CD14-positive monocyte (primary cell): ENCODE measurements at regions of chr10 and their contacts with region 1.

Region 1: DNA sequence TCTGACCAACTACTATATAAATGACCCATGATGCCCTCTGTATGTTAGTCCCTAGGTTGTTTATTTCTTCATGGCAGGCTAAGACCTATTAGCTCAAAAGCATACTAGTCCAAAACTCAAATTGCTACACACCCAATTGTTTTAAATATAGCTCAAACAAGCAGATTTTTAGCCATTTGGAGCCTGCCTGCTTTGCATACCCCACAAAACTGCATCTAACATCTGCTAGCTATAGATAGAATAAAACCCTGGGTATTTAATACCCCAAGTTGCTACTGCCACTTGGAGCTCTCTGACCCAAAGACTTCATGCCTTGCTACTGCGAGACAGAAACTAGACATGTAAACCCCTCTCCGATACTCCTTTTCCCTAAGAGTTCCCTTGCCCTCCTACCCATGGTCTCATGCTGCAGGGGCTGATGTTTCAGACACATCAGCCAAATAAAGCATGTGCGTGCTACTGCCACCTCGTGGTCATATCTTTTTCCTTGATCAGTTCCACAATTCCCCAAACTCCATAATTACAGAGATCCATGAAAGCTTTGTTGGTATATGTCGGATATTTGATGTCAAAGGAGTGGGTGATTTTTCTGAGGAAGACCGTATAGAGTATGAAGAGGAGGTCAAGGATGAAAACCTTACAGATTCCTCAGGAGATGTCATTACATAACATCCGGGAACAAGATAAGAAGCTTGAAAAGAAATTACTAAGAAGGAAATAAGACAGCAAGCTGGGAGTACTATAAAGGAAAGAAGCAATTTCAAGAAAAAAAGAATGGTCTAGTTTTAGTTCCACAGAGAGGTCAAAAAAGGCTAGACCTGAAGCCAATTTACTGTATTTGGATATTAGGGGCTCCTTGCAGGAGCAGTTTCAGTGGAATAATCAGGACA is 386.6 kb downstream of the SH2D4B start:
- DNase-seq: peak; percentile 10 to 28 (median 27)
- H3K4me3 ChIP-seq: no peak overlapping the region
- H3K4me3 Mint-ChIP-seq: no peak overlapping the region
- H3K27ac ChIP-seq: no peak overlapping the region
- H3K27ac Mint-ChIP-seq: no peak overlapping the region
- H3K4me1 ChIP-seq: no peaks in the 10 kb centered on the region
- H3K4me1 Mint-ChIP-seq: no peaks in the 10 kb centered on the region
- H3K27me3 ChIP-seq: no peaks in the 10 kb centered on the region
- H3K27me3 Mint-ChIP-seq: peaks cover 0 to 5% (median 2%) of the 10 kb centered on the region in 3 donors
- CTCF ChIP-seq: peak; percentile 73

Region 2: GRCh38 chr10:80662577-80663261 is 261.6 kb before region 1 on chr10:
- intact Hi-C with region 1: loop called (anchors 10 kb)
- DNase-seq: peak; percentile 53 to 74 (median 69)
- H3K4me3 ChIP-seq: peak overlapping the region in 2 of 3 experiments; percentile 11 to 65
- H3K4me3 Mint-ChIP-seq: peak overlapping the region; percentile 63 to 87
- H3K27ac ChIP-seq: no peak overlapping the region
- H3K27ac Mint-ChIP-seq: peak overlapping the region in 1 of 7 donors; percentile 56
- H3K4me1 ChIP-seq: peaks cover 41 to 42% of the 10 kb centered on the region in 2 donors
- H3K4me1 Mint-ChIP-seq: peaks cover 48% of the 10 kb centered on the region
- H3K27me3 ChIP-seq: no peaks in the 10 kb centered on the region
- H3K27me3 Mint-ChIP-seq: peaks cover 0 to 7% (median 2%) of the 10 kb centered on the region in 3 donors
- CTCF ChIP-seq: peak; percentile 96

Region 3: DNA sequence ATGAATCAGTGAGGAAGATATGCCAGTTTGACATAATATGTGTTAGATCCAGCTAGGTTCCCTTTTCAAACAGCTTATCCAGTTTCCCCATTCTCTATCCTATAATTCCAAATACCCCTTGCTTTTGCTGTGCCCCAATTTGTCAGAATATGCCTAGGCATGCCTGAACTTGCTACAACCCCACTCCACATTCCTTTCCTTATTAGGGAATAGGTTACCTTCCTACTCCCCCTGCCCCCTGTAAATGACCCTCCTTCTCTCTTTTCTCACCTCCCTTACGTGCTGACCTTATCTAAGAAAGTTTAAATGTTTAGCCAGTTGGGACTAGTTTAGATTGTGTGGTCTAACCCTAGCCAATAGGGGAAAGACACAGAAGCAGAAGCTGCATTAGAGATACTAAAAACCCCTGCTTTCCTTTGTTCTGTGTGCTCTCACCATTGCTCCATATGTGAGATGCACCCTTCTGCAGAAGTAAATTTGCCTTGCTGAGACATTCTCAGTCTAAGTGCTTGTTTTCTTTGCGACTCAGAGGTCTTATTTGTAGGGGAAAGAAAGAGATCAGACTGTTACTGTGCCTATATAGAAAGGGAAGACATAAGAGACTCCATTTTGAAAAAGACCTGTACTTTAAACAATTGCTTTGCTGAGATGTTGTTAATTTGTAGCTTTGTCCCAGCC is 118.8 kb before region 1 on chr10:
- intact Hi-C with region 1: no loop called
- DNase-seq: no peak
- H3K4me3 ChIP-seq: no peak overlapping the region
- H3K4me3 Mint-ChIP-seq: no peak overlapping the region
- H3K27ac ChIP-seq: no peak overlapping the region
- H3K27ac Mint-ChIP-seq: no peak overlapping the region
- H3K4me1 ChIP-seq: no peaks in the 10 kb centered on the region
- H3K4me1 Mint-ChIP-seq: no peaks in the 10 kb centered on the region
- H3K27me3 ChIP-seq: no peaks in the 10 kb centered on the region
- H3K27me3 Mint-ChIP-seq: no peaks in the 10 kb centered on the region
- CTCF ChIP-seq: no peak

Region 4: GRCh38 chr10:81013771-81014170 is 89.5 kb after region 1 on chr10:
- intact Hi-C with region 1: no loop called
- DNase-seq: no peak
- H3K4me3 ChIP-seq: no peak overlapping the region
- H3K4me3 Mint-ChIP-seq: no peak overlapping the region
- H3K27ac ChIP-seq: no peak overlapping the region
- H3K27ac Mint-ChIP-seq: no peak overlapping the region
- H3K4me1 ChIP-seq: no peaks in the 10 kb centered on the region
- H3K4me1 Mint-ChIP-seq: peaks cover under 1% of the 10 kb centered on the region
- H3K27me3 ChIP-seq: peaks cover 0 to 3% of the 10 kb centered on the region in 2 donors
- H3K27me3 Mint-ChIP-seq: peaks cover 0 to 4% (median 0%) of the 10 kb centered on the region in 3 donors
- CTCF ChIP-seq: no peak